Brain microvascular endothelial cell (primary cell): ENCODE measurements at regions of chr20 and their contacts with region 1.

Region 1: GRCh38 chr20:47677635-47678453 is 107.4 kb downstream of the SULF2 start:
- DNase-seq: no peak
- H3K4me3 ChIP-seq: no peak overlapping the region
- H3K27ac ChIP-seq: no peak overlapping the region
- H3K27me3 ChIP-seq: no peaks in the 10 kb centered on the region
- CTCF ChIP-seq: peak; percentile 91

Region 2: DNA sequence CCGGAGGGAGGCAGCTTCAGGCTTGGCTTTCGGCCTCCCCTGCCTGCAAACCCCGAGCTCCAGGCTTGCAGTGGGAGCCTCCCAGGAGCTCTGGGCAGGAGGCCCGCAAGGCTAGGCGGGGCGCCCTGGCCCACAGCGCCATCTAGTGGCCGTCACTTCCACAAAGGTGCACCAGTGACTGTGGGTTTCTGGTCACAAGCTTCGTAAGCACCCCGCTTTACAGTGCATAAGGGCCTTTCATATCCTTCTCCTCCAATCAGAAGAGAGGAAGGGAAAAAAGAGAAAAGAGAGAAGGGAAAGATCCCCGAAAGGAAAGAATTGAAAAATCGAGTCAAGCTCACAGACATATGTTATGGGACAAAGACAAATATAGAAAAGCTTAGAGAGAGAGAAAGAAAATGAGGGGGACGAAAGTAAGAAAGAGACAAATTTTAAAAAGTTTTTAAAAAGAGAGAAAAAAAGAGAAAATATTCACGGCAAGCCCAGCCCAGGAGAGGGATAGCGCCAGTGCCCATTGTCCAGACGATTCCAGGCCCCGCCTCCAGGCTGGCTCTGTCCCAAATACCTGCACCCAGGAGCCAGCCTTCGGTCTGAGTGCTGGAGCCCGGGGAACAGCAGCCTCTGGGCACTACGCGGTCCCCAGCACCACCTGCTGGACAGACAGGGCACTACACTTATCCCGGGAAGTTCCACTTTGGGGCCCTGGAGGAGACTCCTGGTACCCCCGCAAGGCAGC is 942.8 kb after region 1 on chr20:
- in situ Hi-C with region 1: loop called (anchors 25 kb)
- DNase-seq: peak; percentile 72
- H3K4me3 ChIP-seq: peak overlapping the region; percentile 34
- H3K27ac ChIP-seq: no peak overlapping the region
- H3K27me3 ChIP-seq: no peaks in the 10 kb centered on the region
- CTCF ChIP-seq: peak; percentile 97